Mammary epithelial cell (primary cell): ENCODE measurements at regions of chr4 and their contacts with region 1.

Region 1: GRCh38 chr4:94757192-94758139 is at the start of gene BMPR1B:
- DNase-seq: peak; percentile 65
- H3K4me3 ChIP-seq: peak within 1 kb of the TSS; percentile 68 to 80 (median 70)
- H3K27ac ChIP-seq: peak within 1 kb of the TSS; percentile 7
- H3K4me1 ChIP-seq: no peaks in the 10 kb centered on the region
- H3K27me3 ChIP-seq: peaks cover 1% of the 10 kb centered on the region
- CTCF ChIP-seq: peak in 1 of 2 donors; percentile 45
- total RNA-seq, gene BMPR1B: 1.7 to 11.3 TPM

Region 2: GRCh38 chr4:94827481-94828110 is 70.1 kb after region 1 on chr4:
- CTCF ChIA-PET with region 1: interaction called, 4 read pairs
- dilution Hi-C with region 1: no loop called
- in situ Hi-C with region 1: no loop called
- intact Hi-C with region 1: loop called (anchors 5 kb)
- DNase-seq: peak; percentile 88
- H3K4me3 ChIP-seq: peak overlapping the region in 2 of 3 experiments; percentile 31 to 45
- H3K27ac ChIP-seq: peak overlapping the region; percentile 92
- H3K4me1 ChIP-seq: peaks cover 25% of the 10 kb centered on the region
- H3K27me3 ChIP-seq: no peaks in the 10 kb centered on the region
- CTCF ChIP-seq: no peak

Region 3: GRCh38 chr4:94889946-94890345 is 132.5 kb after region 1 on chr4:
- CTCF ChIA-PET with region 1: no interaction called
- dilution Hi-C with region 1: no loop called
- in situ Hi-C with region 1: no loop called
- intact Hi-C with region 1: loop called (anchors 10 kb)
- DNase-seq: peak; percentile 72
- H3K4me3 ChIP-seq: no peak overlapping the region
- H3K27ac ChIP-seq: no peak overlapping the region
- H3K4me1 ChIP-seq: peaks cover 10% of the 10 kb centered on the region
- H3K27me3 ChIP-seq: no peaks in the 10 kb centered on the region
- CTCF ChIP-seq: no peak